A673 (cell line): ENCODE measurements at regions of chr19 and their contacts with region 1.

Region 1: DNA sequence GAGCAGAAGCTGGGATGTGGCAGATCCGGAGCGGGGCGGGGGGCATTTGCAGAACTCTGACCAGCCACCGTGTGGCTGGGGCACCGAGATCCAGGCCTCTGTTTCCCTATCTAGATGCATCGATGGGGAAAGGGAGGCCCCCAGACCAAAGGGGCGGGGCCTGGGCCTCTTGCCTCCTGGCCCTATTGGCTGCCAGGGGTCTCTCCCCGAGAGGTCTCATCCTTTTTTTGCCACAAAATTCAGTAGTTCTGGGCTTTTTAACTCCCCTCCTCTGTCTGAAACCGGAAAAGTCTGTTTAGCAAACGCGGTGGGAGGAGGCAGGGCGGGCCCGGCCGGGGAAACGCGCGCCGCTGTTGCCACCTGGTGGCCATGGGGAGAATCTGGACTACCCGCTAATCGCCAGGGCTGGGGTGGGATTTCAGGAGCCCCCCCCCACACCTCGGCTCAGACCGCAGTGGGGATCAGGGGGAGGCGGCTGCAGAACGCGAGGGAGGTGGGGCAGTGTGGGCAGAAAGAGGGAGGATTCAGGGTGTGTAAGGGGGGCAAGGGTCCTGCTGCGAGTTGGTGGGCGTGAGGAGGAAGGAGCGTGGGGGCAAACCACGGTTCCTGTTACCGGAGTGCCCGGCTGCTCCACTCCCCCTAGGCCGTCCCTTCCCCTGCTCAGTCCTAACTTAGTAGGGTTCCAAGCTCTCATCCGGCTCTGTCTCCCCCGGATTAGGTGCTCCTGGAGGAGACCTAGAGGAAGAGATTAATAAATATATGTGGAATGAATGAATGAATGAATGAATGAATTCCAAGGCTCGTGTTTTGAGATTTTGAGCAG is 28.3 kb downstream of the IL12RB1 start:
- DNase-seq: peak; percentile 88
- H3K4me3 ChIP-seq: peak overlapping the region; percentile 30
- H3K27ac ChIP-seq: peak overlapping the region; percentile 20
- H3K4me1 ChIP-seq: peaks cover 6% of the 10 kb centered on the region
- H3K27me3 ChIP-seq: no peaks in the 10 kb centered on the region
- CTCF ChIP-seq: peak; percentile 95

Region 2: GRCh38 chr19:17932485-17933338 is 125.7 kb before region 1 on chr19 and contains the start of gene CCDC124:
- CTCF ChIA-PET with region 1: no interaction called
- POLR2A ChIA-PET with region 1: no interaction called
- intact Hi-C with region 1: loop called (anchors 2 kb)
- DNase-seq: peak; percentile 95
- H3K4me3 ChIP-seq: peak within 1 kb of the TSS; percentile 85
- H3K27ac ChIP-seq: peak within 1 kb of the TSS; percentile 97
- H3K4me1 ChIP-seq: peaks cover 11% of the 10 kb centered on the region
- H3K27me3 ChIP-seq: no peaks in the 10 kb centered on the region
- CTCF ChIP-seq: peak; percentile 98
- total RNA-seq, gene CCDC124: 131 and 135 TPM in 2 replicates

Region 3: DNA sequence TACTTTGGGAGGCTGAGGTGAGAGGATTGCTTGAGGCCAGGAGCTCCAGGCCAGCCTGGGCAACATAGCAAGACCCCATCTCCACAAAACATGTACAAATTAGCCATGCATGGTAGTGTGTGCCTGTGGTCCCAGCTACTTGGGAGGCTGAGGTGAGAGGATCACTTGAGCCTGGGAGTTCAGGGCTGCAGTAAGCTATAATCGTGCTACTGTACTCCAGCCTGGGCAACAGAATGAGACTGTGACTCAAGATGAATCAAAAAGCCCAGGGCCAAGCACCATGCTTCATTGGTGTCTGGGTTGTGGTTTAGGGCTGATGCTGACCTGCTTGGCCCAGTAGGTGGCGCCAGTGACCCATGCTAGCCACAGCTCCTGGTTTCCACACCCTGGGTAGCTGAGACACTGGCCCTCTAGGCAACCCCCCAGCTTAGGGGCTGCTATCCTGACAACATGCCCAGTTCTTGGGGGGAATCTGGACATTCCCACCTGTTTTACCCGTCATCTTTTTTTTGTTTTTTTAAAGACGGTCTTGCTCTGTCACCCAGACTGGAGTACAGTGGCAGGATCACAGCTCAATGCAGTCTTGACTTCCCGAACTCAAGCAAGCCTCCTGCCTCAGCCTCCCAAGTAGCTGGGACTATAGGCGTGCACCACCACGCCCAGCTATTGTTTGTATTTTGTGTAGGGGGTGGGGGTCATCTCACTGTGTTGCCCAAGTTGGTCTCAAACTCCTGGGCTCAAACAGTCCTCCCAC is 120.2 kb before region 1 on chr19:
- CTCF ChIA-PET with region 1: interaction called, 4 read pairs
- POLR2A ChIA-PET with region 1: interaction called, 14 read pairs
- intact Hi-C with region 1: loop called (anchors 1 kb)
- DNase-seq: peak; percentile 84
- H3K4me3 ChIP-seq: no peak overlapping the region
- H3K27ac ChIP-seq: no peak overlapping the region
- H3K4me1 ChIP-seq: peaks cover 18% of the 10 kb centered on the region
- H3K27me3 ChIP-seq: no peaks in the 10 kb centered on the region
- CTCF ChIP-seq: peak; percentile 92

Region 4: DNA sequence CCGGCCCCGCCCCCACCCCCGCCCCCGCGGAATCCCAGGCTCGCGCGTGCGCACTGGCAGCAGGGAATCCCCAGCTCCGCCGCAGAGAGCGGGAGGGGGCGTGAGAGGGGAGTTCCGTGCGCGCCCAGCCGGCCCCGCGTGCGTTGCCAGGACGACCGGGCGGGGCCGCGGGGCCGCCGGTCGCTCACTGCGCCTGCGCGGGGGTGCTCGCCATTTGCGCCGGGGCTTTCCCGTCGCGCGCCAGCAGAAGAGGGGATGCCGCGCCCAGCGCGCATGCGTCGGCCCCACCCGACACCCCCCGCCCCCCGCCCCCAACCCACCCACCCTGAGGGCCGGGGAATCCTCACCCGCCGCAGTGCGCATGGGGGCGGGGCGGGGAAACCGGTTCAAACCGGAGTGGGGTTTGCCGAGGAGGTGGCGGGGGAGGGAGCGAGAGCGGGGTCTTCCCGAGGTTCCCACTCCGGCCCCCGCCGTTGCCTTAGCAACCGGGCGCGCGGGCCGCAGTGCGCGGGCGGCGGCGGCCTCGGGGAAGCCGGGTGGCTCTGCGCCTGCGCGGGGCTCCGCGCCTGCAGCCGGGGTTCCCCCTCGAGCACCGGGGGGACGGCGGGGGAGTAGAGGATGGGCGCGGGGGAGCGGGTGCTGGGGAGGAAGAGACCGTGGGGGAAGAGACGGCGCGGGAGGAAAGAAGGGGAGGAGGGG is 110.5 kb before region 1 on chr19:
- CTCF ChIA-PET with region 1: interaction called, 10 read pairs
- POLR2A ChIA-PET with region 1: no interaction called
- intact Hi-C with region 1: loop called (anchors 2 kb)
- DNase-seq: peak; percentile 98
- H3K4me3 ChIP-seq: peak overlapping the region; percentile 45
- H3K27ac ChIP-seq: peak overlapping the region; percentile 78
- H3K4me1 ChIP-seq: peaks cover 70% of the 10 kb centered on the region
- H3K27me3 ChIP-seq: no peaks in the 10 kb centered on the region
- CTCF ChIP-seq: no peak

Region 5: GRCh38 chr19:18007044-18007916 is 51.1 kb before region 1 on chr19:
- CTCF ChIA-PET with region 1: interaction called, 7 read pairs
- POLR2A ChIA-PET with region 1: no interaction called
- intact Hi-C with region 1: loop called (anchors 1 kb)
- DNase-seq: peak; percentile 83
- H3K4me3 ChIP-seq: peak overlapping the region; percentile 43
- H3K27ac ChIP-seq: no peak overlapping the region
- H3K4me1 ChIP-seq: peaks cover 8% of the 10 kb centered on the region
- H3K27me3 ChIP-seq: no peaks in the 10 kb centered on the region
- CTCF ChIP-seq: peak; percentile 99

Region 6: DNA sequence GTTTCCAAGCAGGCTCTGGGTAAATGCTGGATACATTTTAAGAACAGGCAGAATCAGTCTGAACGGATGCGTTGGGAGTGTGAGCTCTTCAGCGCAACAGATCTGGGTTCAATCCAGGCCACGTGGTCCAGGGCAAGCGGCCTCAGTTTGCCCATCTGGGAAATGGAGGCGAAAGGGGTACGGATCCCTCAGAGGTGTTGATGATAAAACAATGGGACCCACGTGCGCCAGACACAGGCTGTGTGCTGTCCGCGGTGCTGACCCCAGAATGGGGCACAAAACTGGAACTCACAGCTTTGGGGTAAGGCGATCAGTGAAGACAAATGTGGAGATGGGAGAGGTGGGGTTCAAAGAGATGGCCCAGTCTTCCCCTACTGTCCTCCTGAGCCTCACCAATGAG is 180.9 kb after region 1 on chr19:
- CTCF ChIA-PET with region 1: no interaction called
- POLR2A ChIA-PET with region 1: no interaction called
- intact Hi-C with region 1: no loop called
- DNase-seq: no peak
- H3K4me3 ChIP-seq: no peak overlapping the region
- H3K27ac ChIP-seq: no peak overlapping the region
- H3K4me1 ChIP-seq: no peaks in the 10 kb centered on the region
- H3K27me3 ChIP-seq: no peaks in the 10 kb centered on the region
- CTCF ChIP-seq: no peak